CD4-positive, alpha-beta memory T cell (primary cell): ENCODE measurements at regions of chr18 and their contacts with region 1.

Region 1: GRCh38 chr18:3245853-3246634 is 1.6 kb upstream of the MYL12A start:
- DNase-seq: peak; percentile 70 to 81 (median 73)
- H3K4me3 ChIP-seq: peak overlapping the region; percentile 76 to 86
- H3K4me3 Mint-ChIP-seq: peak overlapping the region; percentile 93 to 98 (median 96)
- H3K27ac ChIP-seq: peak overlapping the region; percentile 85
- H3K27ac Mint-ChIP-seq: peak overlapping the region; percentile 80 to 99 (median 96)
- H3K4me1 ChIP-seq: peaks cover 32% of the 10 kb centered on the region
- H3K4me1 Mint-ChIP-seq: peaks cover 19 to 52% (median 30%) of the 10 kb centered on the region in 4 donors
- H3K27me3 ChIP-seq: no peaks in the 10 kb centered on the region
- H3K27me3 Mint-ChIP-seq: no peaks in the 10 kb centered on the region

Region 2: DNA sequence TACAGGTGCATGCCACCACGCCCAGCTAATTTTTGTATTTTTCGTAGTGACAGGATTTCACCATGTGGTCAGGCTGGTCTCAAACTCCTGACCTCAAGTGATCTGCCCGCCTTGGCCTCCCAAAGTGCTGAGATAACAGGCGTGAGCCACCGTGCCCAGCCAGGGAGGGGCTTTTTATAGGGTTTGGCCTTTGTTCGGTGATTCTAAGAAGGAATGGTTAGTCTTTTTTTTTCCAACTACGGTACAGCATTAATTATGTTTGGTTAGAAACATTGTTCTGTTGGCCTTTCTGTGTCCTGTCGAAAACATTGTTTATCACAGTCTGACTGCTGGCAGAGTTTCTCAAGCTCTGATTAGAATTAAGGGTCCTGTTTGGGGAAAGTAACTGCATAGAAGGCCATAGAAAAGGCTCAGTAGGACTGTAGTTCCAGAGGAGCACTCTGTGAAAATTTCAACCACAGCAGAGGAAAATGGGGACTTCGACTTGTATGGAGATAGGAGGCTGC is 609.9 kb before region 1 on chr18:
- CTCF ChIA-PET with region 1: no interaction called
- POLR2A ChIA-PET with region 1: interaction called, 12 read pairs
- intact Hi-C with region 1: no loop called
- DNase-seq: no peak
- H3K4me3 ChIP-seq: peak overlapping the region; percentile 19 to 31
- H3K4me3 Mint-ChIP-seq: peak overlapping the region; percentile 81 to 88 (median 85)
- H3K27ac ChIP-seq: peak overlapping the region; percentile 87
- H3K27ac Mint-ChIP-seq: peak overlapping the region in 6 of 7 donors; percentile 97 to 99 (median 98)
- H3K4me1 ChIP-seq: peaks cover 88% of the 10 kb centered on the region
- H3K4me1 Mint-ChIP-seq: peaks cover 61 to 100% (median 88%) of the 10 kb centered on the region in 4 donors
- H3K27me3 ChIP-seq: no peaks in the 10 kb centered on the region
- H3K27me3 Mint-ChIP-seq: peaks cover 0 to 2% of the 10 kb centered on the region in 2 donors

Region 3: GRCh38 chr18:2971741-2972552 is 274.1 kb before region 1 on chr18:
- CTCF ChIA-PET with region 1: interaction called, 4 read pairs
- POLR2A ChIA-PET with region 1: interaction called, 11 read pairs
- intact Hi-C with region 1: no loop called
- DNase-seq: peak; percentile 66 to 91 (median 72)
- H3K4me3 ChIP-seq: peak overlapping the region; percentile 34 to 37
- H3K4me3 Mint-ChIP-seq: peak overlapping the region; percentile 82 to 94 (median 88)
- H3K27ac ChIP-seq: peak overlapping the region; percentile 79
- H3K27ac Mint-ChIP-seq: peak overlapping the region; percentile 88 to 98 (median 96)
- H3K4me1 ChIP-seq: peaks cover 100% of the 10 kb centered on the region
- H3K4me1 Mint-ChIP-seq: peaks cover 72 to 96% (median 86%) of the 10 kb centered on the region in 4 donors
- H3K27me3 ChIP-seq: no peaks in the 10 kb centered on the region
- H3K27me3 Mint-ChIP-seq: no peaks in the 10 kb centered on the region

Region 4: DNA sequence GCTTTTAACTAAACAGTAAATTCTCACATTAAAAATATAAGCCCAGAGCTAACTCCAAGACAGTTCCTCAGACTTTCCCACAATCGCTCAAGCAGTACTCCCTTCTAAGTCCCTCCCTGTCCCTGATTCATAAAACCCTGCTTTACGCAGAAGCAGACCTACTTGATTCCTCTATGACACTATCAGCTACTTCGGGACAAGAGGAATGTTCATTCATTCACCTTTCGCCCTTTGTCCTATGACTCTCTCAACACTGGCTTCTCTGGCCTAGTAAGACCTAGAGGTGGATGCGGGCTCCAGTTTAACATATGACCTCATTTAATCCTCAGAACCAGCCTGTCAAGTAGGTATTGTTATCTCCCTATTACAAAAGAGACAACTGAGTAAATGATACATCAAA is 243.3 kb before region 1 on chr18:
- CTCF ChIA-PET with region 1: interaction called, 20 read pairs
- POLR2A ChIA-PET with region 1: interaction called, 8 read pairs
- intact Hi-C with region 1: no loop called
- DNase-seq: no peak
- H3K4me3 ChIP-seq: no peak overlapping the region
- H3K4me3 Mint-ChIP-seq: peak overlapping the region in 3 of 8 donors; percentile 7 to 26 (median 13)
- H3K27ac ChIP-seq: no peak overlapping the region
- H3K27ac Mint-ChIP-seq: peak overlapping the region; percentile 26 to 88 (median 62)
- H3K4me1 ChIP-seq: peaks cover 46% of the 10 kb centered on the region
- H3K4me1 Mint-ChIP-seq: peaks cover 47 to 89% (median 65%) of the 10 kb centered on the region in 4 donors
- H3K27me3 ChIP-seq: no peaks in the 10 kb centered on the region
- H3K27me3 Mint-ChIP-seq: no peaks in the 10 kb centered on the region

Region 5: GRCh38 chr18:3151399-3152264 is 94.4 kb before region 1 on chr18:
- CTCF ChIA-PET with region 1: interaction called, 34 read pairs
- POLR2A ChIA-PET with region 1: interaction called, 14 read pairs
- intact Hi-C with region 1: loop called (anchors 1 kb)
- DNase-seq: peak in 4 of 5 donors; percentile 23 to 34 (median 31)
- H3K4me3 ChIP-seq: no peak overlapping the region
- H3K4me3 Mint-ChIP-seq: no peak overlapping the region
- H3K27ac ChIP-seq: no peak overlapping the region
- H3K27ac Mint-ChIP-seq: peak overlapping the region in 1 of 7 donors; percentile 46
- H3K4me1 ChIP-seq: no peaks in the 10 kb centered on the region
- H3K4me1 Mint-ChIP-seq: peaks cover 0 to 6% (median 4%) of the 10 kb centered on the region in 4 donors
- H3K27me3 ChIP-seq: no peaks in the 10 kb centered on the region
- H3K27me3 Mint-ChIP-seq: peaks cover 0 to 4% of the 10 kb centered on the region in 2 donors

Region 6: GRCh38 chr18:3177902-3178687 is 67.9 kb before region 1 on chr18:
- CTCF ChIA-PET with region 1: no interaction called
- POLR2A ChIA-PET with region 1: no interaction called
- intact Hi-C with region 1: no loop called
- DNase-seq: no peak
- H3K4me3 ChIP-seq: no peak overlapping the region
- H3K4me3 Mint-ChIP-seq: no peak overlapping the region
- H3K27ac ChIP-seq: no peak overlapping the region
- H3K27ac Mint-ChIP-seq: peak overlapping the region in 1 of 7 donors; percentile 63
- H3K4me1 ChIP-seq: no peaks in the 10 kb centered on the region
- H3K4me1 Mint-ChIP-seq: no peaks in the 10 kb centered on the region
- H3K27me3 ChIP-seq: no peaks in the 10 kb centered on the region
- H3K27me3 Mint-ChIP-seq: no peaks in the 10 kb centered on the region

Region 7: DNA sequence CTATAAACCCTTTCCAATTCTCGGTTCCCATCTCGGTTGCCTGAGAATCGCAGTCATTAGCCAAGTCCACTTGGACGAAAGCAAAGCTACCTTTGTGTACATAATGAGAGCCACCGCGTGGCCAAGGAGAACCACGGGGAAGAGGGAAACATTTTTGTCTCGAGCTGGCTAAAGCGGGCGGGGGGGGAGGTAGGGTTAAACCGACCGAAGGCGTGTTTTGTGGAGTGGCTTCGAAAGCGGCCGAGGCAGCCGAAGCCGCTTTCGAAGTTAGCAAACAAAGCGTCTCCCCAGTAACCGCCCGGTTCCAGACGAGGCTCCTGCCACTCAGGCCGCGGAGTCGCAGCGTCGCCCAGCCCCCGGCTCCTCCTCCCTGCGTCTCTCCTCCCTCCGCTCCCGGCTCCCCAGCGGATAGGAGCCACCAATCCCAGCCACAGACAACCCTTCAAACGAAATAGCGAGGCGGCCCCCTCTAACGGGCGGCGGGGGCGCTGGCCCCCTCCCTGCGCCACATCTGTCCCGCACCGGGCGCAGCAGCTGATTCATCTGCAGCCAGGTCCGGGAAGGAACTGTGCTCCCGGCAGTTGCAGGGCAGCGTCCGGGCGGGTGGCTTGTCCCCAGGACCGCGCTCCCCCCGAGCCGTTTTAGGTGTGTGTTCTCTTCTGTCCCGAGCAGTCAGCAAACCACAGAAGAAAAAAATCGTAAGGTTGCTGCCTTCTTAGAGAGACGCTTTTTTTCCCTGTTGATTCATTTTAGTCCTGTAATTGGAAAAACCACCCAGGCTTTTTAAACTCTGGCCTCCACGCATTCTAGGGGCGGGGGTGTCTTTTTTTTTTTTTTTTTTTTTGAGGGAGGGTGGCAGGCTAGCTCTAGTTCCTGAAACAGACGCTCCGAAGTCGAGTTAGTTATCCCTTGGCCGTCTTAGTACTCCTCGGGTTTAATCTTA is 202.1 kb after region 1 on chr18:
- CTCF ChIA-PET with region 1: no interaction called
- POLR2A ChIA-PET with region 1: interaction called, 34 read pairs
- intact Hi-C with region 1: loop called (anchors 1 kb)
- DNase-seq: peak; percentile 84 to 91 (median 89)
- H3K4me3 ChIP-seq: peak overlapping the region; percentile 74 to 84
- H3K4me3 Mint-ChIP-seq: peak overlapping the region; percentile 93 to 98 (median 96)
- H3K27ac ChIP-seq: peak overlapping the region; percentile 94
- H3K27ac Mint-ChIP-seq: peak overlapping the region; percentile 99 to 100 (median 100)
- H3K4me1 ChIP-seq: peaks cover 21% of the 10 kb centered on the region
- H3K4me1 Mint-ChIP-seq: peaks cover 9 to 53% (median 22%) of the 10 kb centered on the region in 4 donors
- H3K27me3 ChIP-seq: no peaks in the 10 kb centered on the region
- H3K27me3 Mint-ChIP-seq: peaks cover 0 to 6% of the 10 kb centered on the region in 2 donors